PC-9 (cell line): ENCODE measurements at regions of chr7 and their contacts with region 1.

Region 1: DNA sequence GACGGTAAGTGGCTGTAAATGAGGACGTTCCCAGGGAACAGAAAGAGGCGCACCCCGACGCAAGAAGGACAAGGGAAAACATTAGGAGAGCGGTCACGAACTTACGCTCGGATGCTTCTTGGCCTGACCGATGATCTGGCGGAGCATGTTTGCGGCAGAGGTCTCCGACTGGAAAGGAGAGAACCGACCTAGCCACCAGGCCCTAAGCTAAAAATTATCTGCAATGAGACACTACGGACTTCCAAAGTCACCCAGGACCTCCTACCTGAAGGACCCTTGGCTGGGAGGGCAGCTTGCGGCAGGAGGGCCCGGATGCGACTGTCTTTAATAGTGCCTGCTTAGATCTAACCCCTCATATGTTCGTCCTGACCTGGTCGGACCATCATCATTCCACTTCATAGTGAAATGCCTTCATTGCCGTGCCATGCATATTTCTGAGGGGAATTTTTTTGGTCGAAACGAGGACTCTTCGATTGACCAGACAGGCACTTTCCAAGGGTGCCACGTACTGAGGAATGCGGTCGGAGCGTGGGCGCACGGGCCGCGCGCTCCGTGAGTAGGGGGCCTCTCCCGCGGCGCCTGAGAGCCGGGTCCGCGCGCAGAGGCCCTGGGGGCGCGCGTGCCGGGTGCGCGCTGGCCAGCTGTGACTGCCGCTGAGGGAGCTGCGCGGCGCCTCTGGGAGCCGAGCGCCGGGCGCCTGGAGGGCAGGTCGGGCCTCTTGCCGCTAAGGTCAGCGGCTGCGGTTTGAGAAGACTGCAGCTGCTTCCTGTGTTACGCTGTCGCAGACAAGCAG is 33.6 kb upstream of the PHF14 start:
- DNase-seq: peak; percentile 85 to 93
- H3K4me3 ChIP-seq: peak overlapping the region; percentile 73
- H3K27ac ChIP-seq: peak overlapping the region; percentile 89
- H3K4me1 ChIP-seq: peaks cover 21% of the 10 kb centered on the region
- H3K27me3 ChIP-seq: peaks cover 18% of the 10 kb centered on the region; the same call in 1 of the 2 replicates
- CTCF ChIP-seq: no peak

Region 2: GRCh38 chr7:10973061-10973944 is 33.2 kb after region 1 on chr7 and contains the start of gene PHF14:
- CTCF ChIA-PET with region 1: no interaction called
- POLR2A ChIA-PET with region 1: interaction called, 11 read pairs
- intact Hi-C with region 1: loop called (anchors 1 kb)
- DNase-seq: peak; percentile 97 to 98
- H3K4me3 ChIP-seq: peak within 1 kb of the TSS; percentile 94
- H3K27ac ChIP-seq: peak within 1 kb of the TSS; percentile 91
- H3K4me1 ChIP-seq: peaks cover 24% of the 10 kb centered on the region
- H3K27me3 ChIP-seq: no peaks in the 10 kb centered on the region
- CTCF ChIP-seq: 0 out of 2 replicates have a peak, but pooled peaks have one; percentile 12
- total RNA-seq, gene PHF14: 48.7 and 49.3 TPM in 2 replicates